Aorta (tissue), 5 donors: ENCODE measurements at regions of chr14 and their contacts with region 1.

Region 1: GRCh38 chr14:89915114-89915878 is 39.2 kb downstream of the EFCAB11 start:
- DNase-seq: peak in 1 of 2 donors; percentile 54
- ATAC-seq: peak; percentile 79
- H3K4me3 ChIP-seq: no peak overlapping the region
- H3K27ac ChIP-seq: no peak overlapping the region
- H3K4me1 ChIP-seq: no peaks in the 10 kb centered on the region
- H3K27me3 ChIP-seq: no peaks in the 10 kb centered on the region

Region 2: DNA sequence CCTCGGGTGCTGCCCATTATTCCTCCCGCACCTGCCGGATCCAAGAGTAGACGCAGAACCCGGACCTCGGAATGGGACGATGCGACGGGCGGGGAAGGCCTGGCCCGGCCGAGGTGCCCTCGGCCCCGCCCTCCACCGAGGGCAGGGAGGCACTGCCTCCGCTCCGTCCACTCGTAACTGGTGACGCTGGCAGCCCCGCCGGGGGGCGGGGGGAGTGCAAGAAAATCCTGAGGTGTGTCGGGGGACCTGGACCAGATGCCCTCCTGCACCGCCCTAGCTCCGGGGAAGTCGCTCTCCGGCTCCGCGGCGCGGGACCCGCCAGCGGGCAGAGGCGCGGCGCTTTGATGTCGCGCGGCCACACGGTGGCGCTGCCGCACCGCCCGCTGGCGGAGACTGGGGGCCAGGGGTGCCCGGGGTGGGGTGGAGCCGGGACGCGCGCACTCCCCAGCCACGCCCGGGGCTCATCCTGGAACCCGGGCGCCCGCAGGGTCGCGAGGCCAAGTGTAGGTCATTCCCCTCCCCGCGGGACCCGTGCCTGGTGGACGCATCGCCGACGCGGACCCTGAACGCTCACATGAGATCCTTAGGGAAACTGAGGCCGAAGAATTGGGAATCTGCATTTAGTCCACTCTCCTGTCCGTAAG is 888.1 kb before region 1 on chr14:
- intact Hi-C with region 1: loop called (anchors 1 to 5 kb)
- DNase-seq: peak; percentile 61 to 88
- ATAC-seq: peak; percentile 91
- H3K4me3 ChIP-seq: peak overlapping the region; percentile 33 to 35
- H3K27ac ChIP-seq: no peak overlapping the region
- H3K4me1 ChIP-seq: no peaks in the 10 kb centered on the region
- H3K27me3 ChIP-seq: no peaks in the 10 kb centered on the region

Region 3: GRCh38 chr14:89237921-89238529 is 677.3 kb before region 1 on chr14:
- intact Hi-C with region 1: loop called (anchors 5 to 10 kb)
- DNase-seq: no peak
- ATAC-seq: no peak
- H3K4me3 ChIP-seq: no peak overlapping the region
- H3K27ac ChIP-seq: no peak overlapping the region
- H3K4me1 ChIP-seq: peaks cover 3 to 7% of the 10 kb centered on the region in 2 donors
- H3K27me3 ChIP-seq: no peaks in the 10 kb centered on the region

Region 4: GRCh38 chr14:89813617-89814031 is 101.7 kb before region 1 on chr14:
- intact Hi-C with region 1: loop called in 1 of 2 experiments (anchors 10 kb)
- DNase-seq: peak; percentile 66 to 84
- ATAC-seq: peak; percentile 80
- H3K4me3 ChIP-seq: no peak overlapping the region
- H3K27ac ChIP-seq: peak overlapping the region; percentile 41 to 71
- H3K4me1 ChIP-seq: peaks cover 0 to 3% of the 10 kb centered on the region in 2 donors
- H3K27me3 ChIP-seq: no peaks in the 10 kb centered on the region